A673 (cell line): ENCODE measurements at regions of chr18 and their contacts with region 1.

Region 1: DNA sequence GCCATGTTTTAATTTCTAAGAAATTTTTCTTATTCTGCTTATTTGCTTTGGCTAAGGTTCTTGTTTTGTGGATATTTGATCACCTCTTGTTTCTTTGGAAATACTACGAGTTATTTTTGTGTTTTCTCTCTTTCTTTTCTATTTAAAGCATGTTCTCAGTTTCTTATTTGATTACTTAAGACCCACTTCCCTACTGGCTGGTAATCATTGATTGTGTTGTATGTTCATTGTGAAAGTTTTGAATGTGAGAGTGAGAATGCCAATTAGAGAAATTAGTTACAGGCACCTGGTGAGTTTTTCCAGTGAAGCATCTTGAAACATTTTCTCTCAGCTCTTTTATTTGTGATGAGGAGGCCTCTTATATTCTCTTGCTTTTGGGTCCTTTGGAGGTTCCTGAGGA is 226.7 kb upstream of the MC4R start:
- DNase-seq: no peak
- H3K4me3 ChIP-seq: no peak overlapping the region
- H3K27ac ChIP-seq: no peak overlapping the region
- H3K4me1 ChIP-seq: no peaks in the 10 kb centered on the region
- H3K27me3 ChIP-seq: peaks cover 3% of the 10 kb centered on the region
- CTCF ChIP-seq: no peak

Region 2: GRCh38 chr18:60656553-60656952 is 57.3 kb after region 1 on chr18:
- CTCF ChIA-PET with region 1: no interaction called
- POLR2A ChIA-PET with region 1: no interaction called
- intact Hi-C with region 1: loop called (anchors 10 kb)
- DNase-seq: no peak
- H3K4me3 ChIP-seq: no peak overlapping the region
- H3K27ac ChIP-seq: no peak overlapping the region
- H3K4me1 ChIP-seq: no peaks in the 10 kb centered on the region
- H3K27me3 ChIP-seq: peaks cover 4% of the 10 kb centered on the region
- CTCF ChIP-seq: no peak

Region 3: GRCh38 chr18:60846396-60846795 is 247.1 kb after region 1 on chr18:
- CTCF ChIA-PET with region 1: no interaction called
- POLR2A ChIA-PET with region 1: no interaction called
- intact Hi-C with region 1: no loop called
- DNase-seq: no peak
- H3K4me3 ChIP-seq: no peak overlapping the region
- H3K27ac ChIP-seq: no peak overlapping the region
- H3K4me1 ChIP-seq: no peaks in the 10 kb centered on the region
- H3K27me3 ChIP-seq: no peaks in the 10 kb centered on the region
- CTCF ChIP-seq: no peak

Region 4: GRCh38 chr18:61127714-61128467 is 528.6 kb after region 1 on chr18:
- CTCF ChIA-PET with region 1: no interaction called
- POLR2A ChIA-PET with region 1: no interaction called
- intact Hi-C with region 1: no loop called
- DNase-seq: no peak
- H3K4me3 ChIP-seq: no peak overlapping the region
- H3K27ac ChIP-seq: no peak overlapping the region
- H3K4me1 ChIP-seq: no peaks in the 10 kb centered on the region
- H3K27me3 ChIP-seq: peaks cover 12% of the 10 kb centered on the region
- CTCF ChIP-seq: no peak